ENCODE measurements at regions of chr4 and their contacts with region 1.

Region 1: GRCh38 chr4:40455340-40455902 is 120.3 kb downstream of the CHRNA9 start:
- DNase-seq: no peak
- ATAC-seq: no peak
- H3K4me3 ChIP-seq: no peak overlapping the region
- H3K27ac ChIP-seq: no peak overlapping the region
- H3K4me1 ChIP-seq: peaks cover 3% of the 10 kb centered on the region
- H3K27me3 ChIP-seq: no peaks in the 10 kb centered on the region
- CTCF ChIP-seq: no peak
- EP300 ChIP-seq: no peak
- POLR2A ChIP-seq: no peak
- RAD21 ChIP-seq: no peak

Region 2: GRCh38 chr4:40325189-40326019 is 130.0 kb before region 1 on chr4:
- CTCF ChIA-PET with region 1: interaction called, 7 read pairs
- POLR2A ChIA-PET with region 1: no interaction called
- RAD21 ChIA-PET with region 1: no interaction called
- SMC1A ChIA-PET with region 1: interaction called, 13 read pairs
- in situ Hi-C with region 1: no loop called
- intact Hi-C with region 1: no loop called
- DNase-seq: no peak
- ATAC-seq: peak; percentile 98
- H3K4me3 ChIP-seq: no peak overlapping the region
- H3K27ac ChIP-seq: no peak overlapping the region
- H3K4me1 ChIP-seq: no peaks in the 10 kb centered on the region
- H3K27me3 ChIP-seq: no peaks in the 10 kb centered on the region
- CTCF ChIP-seq: peak; percentile 86 to 94 (median 89)
- EP300 ChIP-seq: no peak
- POLR2A ChIP-seq: no peak
- RAD21 ChIP-seq: peak; percentile 96

Region 3: GRCh38 chr4:40438384-40439026 is 16.9 kb before region 1 on chr4:
- CTCF ChIA-PET with region 1: interaction called, 7 read pairs
- POLR2A ChIA-PET with region 1: interaction called, 14 read pairs
- RAD21 ChIA-PET with region 1: interaction called, 15 read pairs
- SMC1A ChIA-PET with region 1: interaction called, 21 read pairs
- in situ Hi-C with region 1: no loop called
- intact Hi-C with region 1: no loop called
- DNase-seq: no peak
- ATAC-seq: no peak
- H3K4me3 ChIP-seq: no peak overlapping the region
- H3K27ac ChIP-seq: no peak overlapping the region
- H3K4me1 ChIP-seq: peaks cover 11% of the 10 kb centered on the region
- H3K27me3 ChIP-seq: no peaks in the 10 kb centered on the region
- CTCF ChIP-seq: no peak
- EP300 ChIP-seq: no peak
- POLR2A ChIP-seq: no peak
- RAD21 ChIP-seq: no peak

Region 4: DNA sequence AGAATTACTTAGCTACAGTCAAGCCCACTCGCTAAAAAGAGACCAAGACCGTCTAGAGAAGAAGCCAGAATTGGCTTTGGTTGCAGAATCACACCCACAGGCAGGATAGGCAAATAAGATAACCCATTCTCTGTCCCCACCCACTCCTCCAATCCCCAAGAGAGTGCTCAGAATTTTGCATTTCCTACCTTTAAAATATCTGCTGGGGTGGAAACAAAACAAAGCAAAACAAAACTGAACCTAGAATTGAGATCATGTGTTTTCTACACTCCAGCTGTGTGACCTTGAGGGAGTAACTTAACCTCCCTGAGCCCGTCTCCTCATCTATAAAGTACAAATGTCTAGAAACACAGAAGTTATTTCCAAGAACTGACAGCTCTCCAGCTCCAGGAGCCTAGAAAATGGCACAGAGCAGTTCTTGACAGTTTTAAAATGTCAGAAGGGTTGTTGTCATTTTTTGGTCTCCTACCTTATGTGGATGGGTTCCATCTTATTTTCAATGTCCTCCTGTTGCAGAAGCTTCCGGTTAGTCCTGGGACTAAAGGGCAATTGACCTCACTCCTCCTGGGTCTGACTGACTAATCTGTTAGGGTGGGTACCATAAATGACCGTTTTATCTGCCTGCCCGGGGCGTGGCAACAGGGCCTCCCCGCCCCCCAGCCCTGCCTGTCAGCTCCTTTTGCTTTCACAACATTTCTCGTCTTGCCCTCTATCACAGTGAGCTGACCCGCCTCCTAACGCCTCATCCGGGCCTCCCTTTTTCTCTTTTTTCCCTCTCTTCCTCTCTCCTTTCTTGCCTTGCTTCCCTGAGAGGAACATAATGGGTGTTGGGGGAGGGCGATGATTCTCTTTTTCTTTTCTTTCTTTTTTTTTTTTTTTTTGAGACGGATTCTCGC is 60.2 kb after region 1 on chr4:
- CTCF ChIA-PET with region 1: no interaction called
- POLR2A ChIA-PET with region 1: no interaction called
- RAD21 ChIA-PET with region 1: interaction called, 3 read pairs
- SMC1A ChIA-PET with region 1: interaction called, 13 read pairs
- in situ Hi-C with region 1: no loop called
- intact Hi-C with region 1: no loop called
- DNase-seq: peak; percentile 95
- ATAC-seq: peak; percentile 87
- H3K4me3 ChIP-seq: peak overlapping the region; percentile 47; the same call in 1 of the 2 replicates
- H3K27ac ChIP-seq: peak overlapping the region; percentile 88
- H3K4me1 ChIP-seq: peaks cover 35% of the 10 kb centered on the region
- H3K27me3 ChIP-seq: no peaks in the 10 kb centered on the region
- CTCF ChIP-seq: no peak
- EP300 ChIP-seq: peak in 1 of 2 experiments; percentile 55; a peak in 1 of 4 replicates
- POLR2A ChIP-seq: no peak
- RAD21 ChIP-seq: no peak